Calu3 (cell line): ENCODE measurements at regions of chr7 and their contacts with region 1.

Region 1: GRCh38 chr7:48052748-48053147 is 17.4 kb downstream of the C7orf57 start:
- DNase-seq: no peak
- H3K4me3 Mint-ChIP-seq: no peak overlapping the region
- H3K27ac Mint-ChIP-seq: no peak overlapping the region
- H3K4me1 Mint-ChIP-seq: peaks cover 10% of the 10 kb centered on the region
- H3K27me3 Mint-ChIP-seq: no peaks in the 10 kb centered on the region
- CTCF ChIP-seq: no peak

Region 2: DNA sequence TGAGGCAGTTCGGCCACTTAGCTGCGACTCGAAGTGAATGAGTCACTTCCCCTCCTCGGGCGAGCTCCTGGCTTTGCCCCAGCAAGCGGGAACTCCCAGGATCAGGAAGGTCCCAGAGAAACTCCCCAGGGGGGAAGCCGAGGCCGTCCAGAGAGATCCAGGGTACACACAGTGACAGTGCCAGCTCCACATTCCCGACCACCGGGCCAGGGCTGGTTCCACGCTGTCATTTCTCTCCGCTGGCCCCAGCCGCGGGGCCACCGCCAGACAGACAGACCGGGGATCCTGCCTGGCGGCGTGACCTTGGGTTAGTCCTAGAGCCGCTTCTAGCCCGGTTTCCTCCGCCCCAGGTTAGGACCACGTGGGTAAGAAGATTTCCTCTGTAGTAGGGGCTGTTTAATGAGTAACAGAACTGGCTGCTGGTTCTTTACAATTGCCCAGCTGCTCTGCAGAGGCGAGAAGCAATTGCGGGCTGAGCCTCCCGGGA is 35.9 kb after region 1 on chr7:
- CTCF ChIA-PET with region 1: interaction called, 3 read pairs
- intact Hi-C with region 1: loop called (anchors 2 kb)
- DNase-seq: peak; percentile 98
- H3K4me3 Mint-ChIP-seq: peak overlapping the region; percentile 82
- H3K27ac Mint-ChIP-seq: peak overlapping the region; percentile 82
- H3K4me1 Mint-ChIP-seq: peaks cover 79% of the 10 kb centered on the region
- H3K27me3 Mint-ChIP-seq: no peaks in the 10 kb centered on the region
- CTCF ChIP-seq: no peak